ENCODE measurements at regions of chr2 and their contacts with region 1.

Region 1: GRCh38 chr2:27024188-27024587 is 8.6 kb upstream of the TMEM214 start:
- DNase-seq: no peak
- ATAC-seq: no peak
- H3K4me3 ChIP-seq: no peak overlapping the region
- H3K27ac ChIP-seq: no peak overlapping the region
- H3K4me1 ChIP-seq: peaks cover 0 to 26% (median 16%) of the 10 kb centered on the region in 4 donors
- H3K27me3 ChIP-seq: no peaks in the 10 kb centered on the region
- CTCF ChIP-seq: no peak
- POLR2A ChIP-seq: no peak

Region 2: DNA sequence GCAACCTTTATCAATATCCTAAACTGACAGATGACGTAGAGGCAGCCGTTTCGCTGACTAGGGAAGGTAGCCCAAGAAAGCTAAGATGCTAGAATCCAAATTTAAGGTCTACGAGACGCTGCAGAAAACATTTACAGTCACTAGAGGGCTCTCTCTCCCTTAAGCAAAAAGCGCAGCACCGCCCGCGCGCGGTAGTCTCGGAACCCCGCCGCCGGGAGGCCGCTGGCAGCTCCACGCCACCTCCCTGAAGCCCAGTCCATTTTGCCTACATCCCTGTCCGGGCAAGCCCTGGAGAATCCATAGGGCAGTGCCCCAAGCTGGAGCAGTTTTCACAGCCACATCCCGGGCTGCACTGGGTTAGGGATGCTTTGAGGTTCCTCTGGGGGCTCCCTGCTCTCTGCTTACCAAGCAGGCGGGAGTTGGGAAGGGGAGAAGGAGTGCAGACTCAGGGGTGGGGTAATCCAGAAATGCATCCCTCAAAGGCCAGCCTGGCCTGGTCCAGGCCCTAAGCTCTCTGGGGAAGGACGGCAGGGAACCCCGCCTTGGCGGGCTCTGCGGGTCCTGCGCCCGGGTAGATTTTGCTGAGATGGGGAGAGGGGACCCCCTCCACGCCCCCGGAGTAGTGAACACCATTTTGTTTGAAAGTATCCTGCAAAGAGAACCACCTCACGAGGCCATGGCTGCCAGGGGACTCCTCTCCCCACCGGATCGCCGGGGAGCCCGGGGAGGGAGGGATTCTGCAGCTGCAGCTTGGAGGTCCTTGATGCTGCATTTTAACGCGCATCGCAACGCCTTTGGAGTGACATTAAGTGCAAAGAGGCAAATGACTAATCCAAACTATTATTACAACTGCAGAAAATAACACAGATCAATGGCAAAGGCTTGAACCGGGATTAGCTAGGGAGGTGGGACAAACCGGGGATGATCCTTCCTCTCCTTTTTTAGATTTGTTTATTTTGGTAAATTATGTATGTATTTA is 177.6 kb before region 1 on chr2:
- intact Hi-C with region 1: loop called in 1 of 2 experiments (anchors 10 kb)
- DNase-seq: peak; percentile 70 to 76 (median 73)
- ATAC-seq: peak; percentile 91 to 97 (median 94)
- H3K4me3 ChIP-seq: no peak overlapping the region
- H3K27ac ChIP-seq: no peak overlapping the region
- H3K4me1 ChIP-seq: peaks cover 0 to 21% (median 3%) of the 10 kb centered on the region in 4 donors
- H3K27me3 ChIP-seq: peaks cover 0 to 28% of the 10 kb centered on the region in 2 donors
- CTCF ChIP-seq: peak; percentile 65 to 85 (median 78)
- POLR2A ChIP-seq: no peak

Region 3: DNA sequence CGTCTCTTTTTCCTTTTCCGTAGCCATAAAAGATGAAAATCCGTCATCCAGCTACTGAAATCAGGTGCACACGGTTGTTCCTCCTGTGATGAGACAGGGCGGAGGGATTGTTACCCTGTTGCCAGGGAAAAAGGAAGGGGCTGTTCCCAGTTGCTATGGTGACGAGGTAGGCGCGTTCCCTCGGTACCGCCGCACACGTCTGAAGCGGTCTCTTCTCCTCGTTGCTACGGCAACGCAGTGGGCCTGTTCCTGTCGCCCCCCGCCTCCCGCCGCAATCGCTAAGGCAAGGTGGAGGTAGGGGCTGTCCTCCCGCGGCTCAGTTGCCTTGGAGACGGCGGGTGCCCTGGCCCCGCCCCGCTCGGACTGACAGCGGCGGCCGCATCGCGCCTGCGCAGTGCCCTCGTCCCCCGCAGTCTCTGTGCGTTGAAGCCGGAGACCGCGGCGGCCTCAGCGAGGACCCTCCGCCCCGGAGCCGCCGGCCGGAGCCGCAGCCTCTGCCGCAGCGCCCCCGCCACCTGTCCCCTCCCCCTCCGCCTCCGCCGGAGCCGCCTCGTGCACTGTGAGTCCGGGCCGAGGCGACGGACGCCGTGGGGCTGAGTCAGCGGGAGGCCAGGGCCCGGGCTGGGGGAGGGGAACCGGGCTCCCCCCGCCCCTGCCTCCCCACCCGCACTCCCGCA is 53.8 kb before region 1 on chr2 and contains the start of gene MAPRE3:
- intact Hi-C with region 1: no loop called
- DNase-seq: peak; percentile 86 to 89 (median 88)
- ATAC-seq: peak; percentile 94 to 97 (median 94)
- H3K4me3 ChIP-seq: peak within 1 kb of the TSS; percentile 76 to 88 (median 87)
- H3K27ac ChIP-seq: peak within 1 kb of the TSS; percentile 50 to 65 (median 52)
- H3K4me1 ChIP-seq: peaks cover 0 to 14% (median 5%) of the 10 kb centered on the region in 4 donors
- H3K27me3 ChIP-seq: no peaks in the 10 kb centered on the region
- CTCF ChIP-seq: no peak
- POLR2A ChIP-seq: peak; percentile 55
- total RNA-seq, gene MAPRE3: 13.7 to 22.3 (median 17.3) TPM

Region 4: DNA sequence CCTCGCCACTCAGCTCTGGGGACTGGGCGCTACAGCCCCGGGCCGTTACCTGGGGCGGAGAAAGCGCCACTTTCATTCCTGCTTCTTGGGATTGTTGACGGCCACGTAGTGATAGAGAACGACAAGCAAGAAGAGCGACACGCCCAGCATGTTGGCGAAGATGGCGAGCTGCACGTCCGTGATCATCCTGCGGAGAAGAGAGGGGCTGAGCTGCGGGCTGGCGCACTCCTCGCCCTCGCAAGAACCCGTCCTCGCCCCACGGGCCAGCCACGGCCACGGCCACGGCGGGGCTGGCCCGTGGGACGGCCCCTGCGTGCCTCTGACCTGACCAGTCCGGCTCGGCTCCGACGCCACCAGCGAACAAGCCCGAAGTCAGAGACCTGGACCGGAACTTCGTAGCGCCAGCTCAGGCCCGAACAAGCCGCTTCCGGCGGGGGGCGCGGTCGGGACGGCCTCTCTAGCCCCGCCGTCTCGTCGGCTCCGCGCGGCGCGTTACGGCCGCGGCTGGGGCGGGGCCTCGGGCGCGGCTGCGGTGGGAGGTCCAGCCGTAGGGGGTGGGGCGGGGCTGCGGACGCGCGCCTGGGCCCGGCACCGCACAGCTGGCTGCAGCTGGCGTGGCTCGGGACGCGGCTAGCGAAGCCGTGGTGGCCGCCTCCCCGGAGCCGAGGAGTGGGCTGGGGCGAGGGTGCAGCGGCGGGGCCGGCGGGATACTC is 47.2 kb after region 1 on chr2 and contains the start of gene OST4:
- intact Hi-C with region 1: no loop called
- DNase-seq: peak; percentile 96 to 97 (median 96)
- ATAC-seq: peak; percentile 93 to 98 (median 96)
- H3K4me3 ChIP-seq: peak within 1 kb of the TSS; percentile 85 to 94 (median 91)
- H3K27ac ChIP-seq: peak within 1 kb of the TSS; percentile 75 to 89 (median 80)
- H3K4me1 ChIP-seq: peaks cover 0 to 10% (median 4%) of the 10 kb centered on the region in 4 donors
- H3K27me3 ChIP-seq: no peaks in the 10 kb centered on the region
- CTCF ChIP-seq: peak in 2 of 4 donors; percentile 11 to 34
- POLR2A ChIP-seq: peak; percentile 78
- total RNA-seq, gene OST4: 144 to 182 (median 161) TPM

Region 5: DNA sequence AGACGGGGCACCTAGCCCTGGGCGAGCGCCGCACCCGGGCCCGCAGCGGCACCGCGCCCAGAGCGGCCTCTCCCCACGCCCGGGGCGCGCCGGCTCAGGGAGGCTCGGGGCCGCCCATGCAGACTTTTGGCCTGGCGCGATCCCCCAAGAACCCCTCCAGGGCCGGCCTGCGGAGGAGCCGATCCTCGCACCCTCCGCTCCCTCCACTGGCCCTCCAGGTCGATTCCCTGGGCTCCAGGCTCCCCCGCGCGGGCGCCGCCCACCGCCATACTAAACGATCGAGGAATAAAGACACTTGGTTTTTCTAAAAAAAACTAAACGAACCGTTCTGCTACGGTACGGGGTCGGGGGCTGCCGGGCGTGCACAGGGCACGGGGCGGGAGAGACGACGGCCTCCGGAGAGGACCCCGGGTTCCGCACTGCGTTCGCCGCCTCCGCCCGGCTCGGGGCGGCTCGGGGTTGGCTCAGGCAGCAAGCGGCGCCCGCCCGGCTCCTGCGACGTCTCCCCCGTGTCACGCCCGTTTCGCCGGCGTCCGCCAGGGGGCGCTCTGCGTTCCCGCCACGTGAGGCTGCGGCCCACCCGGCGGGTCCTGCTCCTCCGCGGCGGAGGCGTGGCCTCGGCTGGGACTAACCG is 62.0 kb after region 1 on chr2:
- intact Hi-C with region 1: loop called in 1 of 2 experiments (anchors 10 kb)
- DNase-seq: peak; percentile 96 to 97 (median 97)
- ATAC-seq: peak; percentile 67 to 86 (median 78)
- H3K4me3 ChIP-seq: peak overlapping the region; percentile 52 to 77 (median 64)
- H3K27ac ChIP-seq: peak overlapping the region; percentile 59 to 80 (median 75)
- H3K4me1 ChIP-seq: peaks cover 0 to 30% (median 7%) of the 10 kb centered on the region in 4 donors
- H3K27me3 ChIP-seq: no peaks in the 10 kb centered on the region
- CTCF ChIP-seq: peak; percentile 87 to 98 (median 93)
- POLR2A ChIP-seq: peak; percentile 58